ENCODE measurements at regions of chr16 and their contacts with region 1.

Region 1: DNA sequence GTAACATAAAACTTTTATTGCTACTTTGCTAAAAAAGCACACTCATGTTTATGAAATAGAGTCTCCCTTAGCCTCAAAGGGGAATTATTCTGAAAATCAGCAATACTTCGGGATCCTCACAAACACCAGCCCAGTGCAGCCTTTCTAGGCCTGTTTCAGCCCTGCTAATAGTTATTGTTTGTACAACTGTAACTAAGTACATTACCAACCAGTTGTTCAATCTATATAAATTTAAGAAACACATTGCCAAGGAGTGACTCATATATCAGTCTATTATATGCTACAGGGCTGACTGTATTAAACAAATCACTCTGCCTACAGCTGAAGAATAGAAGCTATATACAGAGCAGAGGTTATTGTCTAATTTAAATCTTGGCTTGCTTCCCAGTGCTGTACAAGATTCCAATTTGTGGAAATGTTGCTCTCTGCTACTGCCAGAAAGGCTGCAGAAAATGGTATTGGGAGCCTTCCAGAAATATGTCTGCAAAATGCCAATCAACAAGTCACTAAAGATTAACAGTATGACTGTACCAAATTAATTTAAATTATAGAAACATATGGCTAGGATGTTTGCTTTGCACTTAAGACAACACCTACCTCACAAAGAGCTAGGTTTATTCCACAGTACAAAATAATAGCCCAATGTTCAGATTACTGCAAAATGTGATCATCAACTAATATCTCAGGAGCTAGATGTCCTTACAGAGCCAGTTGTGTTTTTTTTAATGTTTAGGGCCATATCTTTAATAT is 49.7 kb downstream of the TOX3 start:
- DNase-seq: peak; percentile 71
- ATAC-seq: peak; percentile 67
- H3K4me3 ChIP-seq: peak overlapping the region in 2 of 3 experiments; percentile 43 to 47; a peak in 4 of 6 replicates
- H3K27ac ChIP-seq: peak overlapping the region; percentile 94
- H3K4me1 ChIP-seq: peaks cover 98% of the 10 kb centered on the region
- H3K27me3 ChIP-seq: no peaks in the 10 kb centered on the region
- CTCF ChIP-seq: no peak
- EP300 ChIP-seq: peak in 1 of 2 experiments; percentile 55; a peak in 2 of 4 replicates
- POLR2A ChIP-seq: no peak
- RAD21 ChIP-seq: no peak

Region 2: DNA sequence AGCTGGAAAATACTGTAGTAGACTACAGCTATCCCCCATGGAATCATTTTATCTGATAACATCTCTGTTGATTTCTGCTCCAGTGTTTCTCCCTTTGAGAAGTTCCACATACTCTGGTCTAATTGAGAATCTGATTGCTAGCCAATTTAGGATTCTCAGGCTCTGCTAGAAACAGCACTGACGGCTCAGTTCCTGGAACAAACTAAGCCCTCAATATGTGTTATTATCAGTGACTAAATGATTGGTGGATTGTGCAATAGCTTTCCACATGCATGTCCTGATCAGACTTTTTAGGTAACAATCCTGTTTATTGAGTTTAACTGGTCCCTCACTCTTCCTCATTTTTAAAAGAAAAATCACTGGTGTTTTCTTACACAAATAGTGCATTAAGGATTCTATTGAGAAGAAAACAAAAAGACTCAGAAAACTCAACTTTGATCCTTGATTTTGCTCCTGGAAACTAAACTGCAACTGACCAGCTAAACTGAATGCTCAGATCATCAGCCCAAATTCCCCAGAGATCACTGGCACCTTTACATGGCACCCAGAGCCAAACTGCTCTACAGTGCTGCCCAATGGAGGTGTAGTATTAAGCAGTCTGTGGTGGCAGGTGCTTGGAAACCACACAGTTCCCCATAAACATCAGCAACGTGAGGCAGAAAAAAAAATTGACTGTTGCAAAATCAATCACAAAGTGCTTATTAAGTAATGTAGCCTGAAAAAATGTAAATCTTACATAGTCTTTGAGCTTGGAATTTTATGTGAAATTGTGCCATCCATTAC is 374.0 kb before region 1 on chr16:
- CTCF ChIA-PET with region 1: no interaction called
- POLR2A ChIA-PET with region 1: no interaction called
- in situ Hi-C with region 1: no loop called
- intact Hi-C with region 1: no loop called
- DNase-seq: no peak
- ATAC-seq: no peak
- H3K4me3 ChIP-seq: no peak overlapping the region
- H3K27ac ChIP-seq: no peak overlapping the region
- H3K4me1 ChIP-seq: no peaks in the 10 kb centered on the region
- H3K27me3 ChIP-seq: no peaks in the 10 kb centered on the region
- CTCF ChIP-seq: no peak
- EP300 ChIP-seq: no peak
- POLR2A ChIP-seq: no peak
- RAD21 ChIP-seq: no peak

Region 3: GRCh38 chr16:52398491-52398960 is 98.7 kb before region 1 on chr16:
- CTCF ChIA-PET with region 1: no interaction called
- POLR2A ChIA-PET with region 1: interaction called, 8 read pairs
- in situ Hi-C with region 1: no loop called
- intact Hi-C with region 1: loop called (anchors 1 kb)
- DNase-seq: peak; percentile 99
- ATAC-seq: peak; percentile 100
- H3K4me3 ChIP-seq: no peak overlapping the region
- H3K27ac ChIP-seq: peak overlapping the region; percentile 66
- H3K4me1 ChIP-seq: peaks cover 28% of the 10 kb centered on the region
- H3K27me3 ChIP-seq: no peaks in the 10 kb centered on the region
- CTCF ChIP-seq: no peak
- EP300 ChIP-seq: peak; percentile 79 to 97; a peak in 3 of 4 replicates
- POLR2A ChIP-seq: no peak
- RAD21 ChIP-seq: no peak

Region 4: GRCh38 chr16:52456368-52456767 is 40.9 kb before region 1 on chr16:
- CTCF ChIA-PET with region 1: no interaction called
- POLR2A ChIA-PET with region 1: interaction called, 6 read pairs
- in situ Hi-C with region 1: loop called (anchors 5 kb)
- intact Hi-C with region 1: loop called (anchors 1 kb)
- DNase-seq: peak; percentile 95
- ATAC-seq: peak; percentile 92
- H3K4me3 ChIP-seq: no peak overlapping the region; a peak in 1 of 6 replicates
- H3K27ac ChIP-seq: peak overlapping the region; percentile 73
- H3K4me1 ChIP-seq: peaks cover 64% of the 10 kb centered on the region
- H3K27me3 ChIP-seq: no peaks in the 10 kb centered on the region
- CTCF ChIP-seq: no peak
- EP300 ChIP-seq: peak in 1 of 2 experiments; percentile 77; a peak in 1 of 4 replicates
- POLR2A ChIP-seq: no peak
- RAD21 ChIP-seq: no peak

Region 5: GRCh38 chr16:52512297-52512987 is 15.2 kb after region 1 on chr16:
- CTCF ChIA-PET with region 1: no interaction called
- POLR2A ChIA-PET with region 1: interaction called, 10 read pairs
- in situ Hi-C with region 1: no loop called
- intact Hi-C with region 1: loop called (anchors 2 kb)
- DNase-seq: peak; percentile 58
- ATAC-seq: no peak
- H3K4me3 ChIP-seq: no peak overlapping the region
- H3K27ac ChIP-seq: no peak overlapping the region
- H3K4me1 ChIP-seq: peaks cover 25% of the 10 kb centered on the region
- H3K27me3 ChIP-seq: no peaks in the 10 kb centered on the region
- CTCF ChIP-seq: no peak
- EP300 ChIP-seq: peak in 1 of 2 experiments; percentile 57; a peak in 2 of 4 replicates
- POLR2A ChIP-seq: no peak
- RAD21 ChIP-seq: no peak

Region 6: GRCh38 chr16:52573365-52574299 is 76.4 kb after region 1 on chr16:
- CTCF ChIA-PET with region 1: no interaction called
- POLR2A ChIA-PET with region 1: interaction called, 19 read pairs
- in situ Hi-C with region 1: no loop called
- intact Hi-C with region 1: no loop called
- DNase-seq: peak; percentile 95
- ATAC-seq: peak; percentile 95
- H3K4me3 ChIP-seq: peak overlapping the region in 2 of 3 experiments; percentile 11 to 36; a peak in 4 of 6 replicates
- H3K27ac ChIP-seq: peak overlapping the region; percentile 71
- H3K4me1 ChIP-seq: peaks cover 100% of the 10 kb centered on the region
- H3K27me3 ChIP-seq: no peaks in the 10 kb centered on the region
- CTCF ChIP-seq: no peak
- EP300 ChIP-seq: peak in 1 of 2 experiments; percentile 92; a peak in 2 of 4 replicates
- POLR2A ChIP-seq: peak in 1 of 2 experiments; percentile 48; a peak in 1 of 4 replicates
- RAD21 ChIP-seq: no peak

Region 7: GRCh38 chr16:52611817-52612673 is 114.8 kb after region 1 on chr16:
- CTCF ChIA-PET with region 1: no interaction called
- POLR2A ChIA-PET with region 1: interaction called, 10 read pairs
- in situ Hi-C with region 1: no loop called
- intact Hi-C with region 1: loop called (anchors 2 kb)
- DNase-seq: peak; percentile 99
- ATAC-seq: peak; percentile 100
- H3K4me3 ChIP-seq: peak overlapping the region; percentile 57 to 73 (median 67)
- H3K27ac ChIP-seq: peak overlapping the region; percentile 89
- H3K4me1 ChIP-seq: peaks cover 41% of the 10 kb centered on the region
- H3K27me3 ChIP-seq: no peaks in the 10 kb centered on the region
- CTCF ChIP-seq: no peak
- EP300 ChIP-seq: peak; percentile 23 to 97; a peak in 2 of 4 replicates
- POLR2A ChIP-seq: peak; percentile 56 to 67
- RAD21 ChIP-seq: no peak

Region 8: DNA sequence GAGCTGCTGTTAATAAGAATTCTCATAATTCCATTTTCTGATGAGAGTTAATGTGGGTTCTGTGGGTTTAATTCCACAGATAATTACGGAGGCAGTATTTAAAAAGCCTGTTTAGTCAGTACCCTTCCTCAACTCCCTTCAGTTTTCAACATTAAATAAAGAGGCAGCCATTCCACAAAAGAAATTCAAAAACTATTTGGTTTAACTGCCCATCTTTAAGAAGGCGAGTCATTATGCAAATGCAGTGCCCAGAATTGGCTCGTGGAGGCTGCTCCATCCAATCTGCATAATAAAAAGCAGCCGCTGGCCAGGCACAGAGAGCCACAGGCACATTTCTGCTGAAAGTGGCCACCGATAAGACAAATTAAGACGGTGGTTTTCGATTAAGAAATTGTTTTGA is 244.1 kb after region 1 on chr16:
- CTCF ChIA-PET with region 1: no interaction called
- POLR2A ChIA-PET with region 1: no interaction called
- in situ Hi-C with region 1: no loop called
- intact Hi-C with region 1: no loop called
- DNase-seq: no peak
- ATAC-seq: no peak
- H3K4me3 ChIP-seq: no peak overlapping the region
- H3K27ac ChIP-seq: no peak overlapping the region
- H3K4me1 ChIP-seq: peaks cover 16% of the 10 kb centered on the region
- H3K27me3 ChIP-seq: no peaks in the 10 kb centered on the region
- CTCF ChIP-seq: no peak
- EP300 ChIP-seq: no peak
- POLR2A ChIP-seq: no peak
- RAD21 ChIP-seq: no peak